ENCODE measurements at regions of chr17 and their contacts with region 1.

Region 1: GRCh38 chr17:39808409-39808997 is 55.6 kb downstream of the IKZF3 start:
- DNase-seq: peak; percentile 98
- H3K4me3 Mint-ChIP-seq: peak overlapping the region; percentile 1
- H3K27ac Mint-ChIP-seq: peak overlapping the region; percentile 16
- H3K4me1 Mint-ChIP-seq: peaks cover 37% of the 10 kb centered on the region
- H3K27me3 Mint-ChIP-seq: no peaks in the 10 kb centered on the region
- CTCF ChIP-seq: no peak

Region 2: DNA sequence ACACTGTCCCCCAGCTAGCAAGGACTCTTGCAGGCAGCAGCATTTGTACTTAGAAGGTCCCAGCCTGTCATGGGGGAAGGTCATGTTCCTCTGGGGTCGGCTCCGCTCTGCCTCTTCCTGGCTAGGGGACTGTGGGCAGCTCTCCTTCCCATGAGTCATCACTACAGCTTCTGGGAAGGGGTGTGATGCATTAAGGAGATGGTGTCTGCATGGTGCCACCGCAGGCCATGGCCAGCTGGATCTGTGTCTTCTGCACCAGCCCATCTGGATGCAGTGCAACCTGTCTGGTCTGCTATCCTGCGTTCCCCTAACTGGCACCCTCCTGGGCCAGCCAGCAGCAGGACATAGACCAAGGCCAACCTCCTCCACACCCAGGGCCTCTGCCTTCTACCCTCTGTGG is 165.2 kb before region 1 on chr17:
- CTCF ChIA-PET with region 1: interaction called, 46 read pairs
- intact Hi-C with region 1: no loop called
- DNase-seq: no peak
- H3K4me3 Mint-ChIP-seq: no peak overlapping the region
- H3K27ac Mint-ChIP-seq: no peak overlapping the region
- H3K4me1 Mint-ChIP-seq: peaks cover 62% of the 10 kb centered on the region
- H3K27me3 Mint-ChIP-seq: no peaks in the 10 kb centered on the region
- CTCF ChIP-seq: no peak

Region 3: DNA sequence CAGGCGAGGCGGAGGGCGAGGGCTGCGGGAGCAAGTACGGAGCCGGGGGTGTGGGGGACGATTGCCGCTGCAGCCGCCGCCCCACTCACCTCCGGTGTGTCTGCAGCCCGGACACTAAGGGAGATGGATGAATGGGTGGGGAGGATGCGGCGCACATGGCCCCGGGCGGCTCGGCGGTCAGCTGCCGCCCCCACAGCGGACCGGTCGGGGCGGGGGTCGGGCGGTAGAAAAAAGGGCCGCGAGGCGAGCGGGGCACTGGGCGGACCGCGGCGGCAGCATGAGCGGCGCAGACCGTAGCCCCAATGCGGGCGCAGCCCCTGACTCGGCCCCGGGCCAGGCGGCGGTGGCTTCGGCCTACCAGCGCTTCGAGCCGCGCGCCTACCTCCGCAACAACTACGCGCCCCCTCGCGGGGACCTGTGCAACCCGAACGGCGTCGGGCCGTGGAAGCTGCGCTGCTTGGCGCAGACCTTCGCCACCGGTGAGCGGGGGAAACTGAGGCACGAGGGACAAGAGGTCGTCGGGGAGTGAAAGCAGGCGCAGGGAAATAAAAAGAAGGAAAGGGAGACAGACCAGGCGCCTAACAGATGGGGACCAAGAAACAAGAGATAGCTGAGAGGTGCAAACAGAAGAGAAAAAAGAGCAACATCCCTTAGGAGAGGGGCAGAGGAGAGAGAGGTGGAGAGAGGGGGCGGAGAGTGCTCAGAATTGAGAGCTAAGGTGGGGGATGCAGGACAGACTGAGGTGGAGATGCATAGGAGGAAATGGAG is 140.1 kb before region 1 on chr17 and contains the start of gene PNMT:
- CTCF ChIA-PET with region 1: interaction called, 145 read pairs
- intact Hi-C with region 1: no loop called
- DNase-seq: peak; percentile 100
- H3K4me3 Mint-ChIP-seq: peak within 1 kb of the TSS; percentile 24
- H3K27ac Mint-ChIP-seq: peak within 1 kb of the TSS; percentile 0
- H3K4me1 Mint-ChIP-seq: peaks cover 65% of the 10 kb centered on the region
- H3K27me3 Mint-ChIP-seq: peaks cover 69% of the 10 kb centered on the region
- CTCF ChIP-seq: no peak
- total RNA-seq, gene PNMT: 1.3 and 3.2 TPM in 2 replicates

Region 4: GRCh38 chr17:39704821-39705551 is 103.5 kb before region 1 on chr17:
- CTCF ChIA-PET with region 1: interaction called, 99 read pairs
- intact Hi-C with region 1: no loop called
- DNase-seq: peak; percentile 99
- H3K4me3 Mint-ChIP-seq: peak overlapping the region; percentile 71
- H3K27ac Mint-ChIP-seq: peak overlapping the region; percentile 67
- H3K4me1 Mint-ChIP-seq: peaks cover 92% of the 10 kb centered on the region
- H3K27me3 Mint-ChIP-seq: no peaks in the 10 kb centered on the region
- CTCF ChIP-seq: no peak

Region 5: DNA sequence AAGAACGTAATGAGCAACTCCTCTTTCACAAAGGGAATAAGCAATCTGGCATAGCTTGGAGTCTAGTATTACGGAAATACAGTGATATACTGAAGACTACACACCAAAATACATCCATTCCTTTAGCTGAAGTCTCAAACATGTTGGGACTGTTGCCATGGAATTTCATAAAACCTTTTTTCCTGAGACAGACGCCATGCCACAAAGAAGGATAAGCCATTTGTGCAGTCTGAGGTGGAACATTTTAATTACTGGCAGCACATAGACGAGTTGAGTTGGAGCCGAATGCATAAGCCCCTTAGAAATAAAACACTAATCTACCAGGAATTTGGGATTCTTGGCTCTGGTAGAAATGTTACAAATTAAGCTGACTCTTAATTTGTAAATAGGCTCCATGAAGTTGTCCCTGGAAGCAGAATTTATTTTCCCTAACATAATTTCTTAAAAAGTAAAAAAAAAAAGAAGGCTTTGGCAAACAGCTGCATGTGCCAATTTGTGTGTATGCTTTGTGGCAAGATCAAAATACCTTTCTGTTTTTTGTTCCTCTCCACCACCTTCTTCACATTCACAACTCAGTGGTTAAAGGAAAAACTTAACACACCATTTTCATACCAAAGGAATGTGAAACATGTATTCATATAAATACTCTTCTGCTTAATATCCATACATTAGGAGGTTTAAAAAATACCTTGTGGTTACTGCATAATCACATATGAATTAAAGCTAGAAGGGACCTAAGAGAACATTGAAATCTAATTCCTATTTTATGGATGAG is 45.3 kb before region 1 on chr17:
- CTCF ChIA-PET with region 1: interaction called, 76 read pairs
- intact Hi-C with region 1: no loop called
- DNase-seq: no peak
- H3K4me3 Mint-ChIP-seq: no peak overlapping the region
- H3K27ac Mint-ChIP-seq: no peak overlapping the region
- H3K4me1 Mint-ChIP-seq: peaks cover 12% of the 10 kb centered on the region
- H3K27me3 Mint-ChIP-seq: peaks cover 26% of the 10 kb centered on the region
- CTCF ChIP-seq: no peak

Region 6: GRCh38 chr17:39916918-39917317 is 108.4 kb after region 1 on chr17:
- CTCF ChIA-PET with region 1: interaction called, 596 read pairs
- intact Hi-C with region 1: no loop called
- DNase-seq: peak; percentile 94
- H3K4me3 Mint-ChIP-seq: no peak overlapping the region
- H3K27ac Mint-ChIP-seq: no peak overlapping the region
- H3K4me1 Mint-ChIP-seq: peaks cover 24% of the 10 kb centered on the region
- H3K27me3 Mint-ChIP-seq: no peaks in the 10 kb centered on the region
- CTCF ChIP-seq: no peak

Region 7: GRCh38 chr17:39963829-39964228 is 155.3 kb after region 1 on chr17:
- CTCF ChIA-PET with region 1: interaction called, 501 read pairs
- intact Hi-C with region 1: loop called (anchors 1 kb)
- DNase-seq: peak; percentile 94
- H3K4me3 Mint-ChIP-seq: no peak overlapping the region
- H3K27ac Mint-ChIP-seq: peak overlapping the region; percentile 0
- H3K4me1 Mint-ChIP-seq: peaks cover 45% of the 10 kb centered on the region
- H3K27me3 Mint-ChIP-seq: peaks cover 32% of the 10 kb centered on the region
- CTCF ChIP-seq: no peak